H1 (cell line): ENCODE measurements at regions of chr4 and their contacts with region 1.

Region 1: GRCh38 chr4:6608758-6609414 is 31.6 kb upstream of the MRFAP1 start:
- DNase-seq: peak; percentile 9 to 58
- H3K4me3 ChIP-seq: no peak overlapping the region
- H3K27ac ChIP-seq: no peak overlapping the region
- H3K4me1 ChIP-seq: no peaks in the 10 kb centered on the region; a peak in 2 of 7 replicates
- H3K27me3 ChIP-seq: no peaks in the 10 kb centered on the region
- CTCF ChIP-seq: peak in 2 of 3 experiments; percentile 35 to 55; a peak in 3 of 4 replicates
- EP300 ChIP-seq: no peak
- POLR2A ChIP-seq: no peak
- RAD21 ChIP-seq: peak; percentile 26 to 40; a peak in 3 of 4 replicates

Region 2: GRCh38 chr4:6591313-6591712 is 17.6 kb before region 1 on chr4:
- CTCF ChIA-PET with region 1: interaction called, 10 read pairs
- POLR2A ChIA-PET with region 1: no interaction called
- DNase-seq: no peak
- H3K4me3 ChIP-seq: no peak overlapping the region
- H3K27ac ChIP-seq: no peak overlapping the region
- H3K4me1 ChIP-seq: no peaks in the 10 kb centered on the region; a peak in 3 of 7 replicates
- H3K27me3 ChIP-seq: no peaks in the 10 kb centered on the region
- CTCF ChIP-seq: no peak
- EP300 ChIP-seq: no peak
- POLR2A ChIP-seq: no peak
- RAD21 ChIP-seq: no peak

Region 3: DNA sequence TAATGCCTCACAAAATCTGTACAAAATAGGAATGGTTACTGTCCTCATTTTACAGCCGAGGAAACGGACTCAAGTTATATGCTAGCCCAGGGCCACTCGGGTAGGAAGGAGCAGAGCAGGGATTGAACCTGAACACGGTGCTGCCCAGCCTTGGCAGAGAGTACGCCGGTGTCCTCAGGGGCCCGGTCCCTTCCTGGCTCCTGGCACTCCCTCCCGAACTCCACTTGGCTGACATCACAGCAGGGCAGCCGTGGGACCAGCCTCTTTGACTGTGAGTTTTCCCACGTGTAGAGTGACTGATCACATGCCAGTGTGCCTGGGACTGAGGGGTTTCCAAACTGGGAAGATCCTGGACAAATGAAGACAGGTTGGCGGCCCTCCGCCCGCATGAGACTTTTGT is 10.2 kb before region 1 on chr4:
- CTCF ChIA-PET with region 1: interaction called, 11 read pairs
- POLR2A ChIA-PET with region 1: interaction called, 5 read pairs
- DNase-seq: no peak
- H3K4me3 ChIP-seq: no peak overlapping the region
- H3K27ac ChIP-seq: no peak overlapping the region
- H3K4me1 ChIP-seq: no peaks in the 10 kb centered on the region; a peak in 2 of 7 replicates
- H3K27me3 ChIP-seq: no peaks in the 10 kb centered on the region
- CTCF ChIP-seq: no peak
- EP300 ChIP-seq: no peak
- POLR2A ChIP-seq: no peak
- RAD21 ChIP-seq: no peak